CD8-positive, alpha-beta T cell (primary cell): ENCODE measurements at regions of chr16 and their contacts with region 1.

Region 1: GRCh38 chr16:50489182-50489581 is 59.0 kb upstream of the NKD1 start:
- DNase-seq: no peak
- ATAC-seq: no peak
- H3K4me3 ChIP-seq: no peak overlapping the region
- H3K4me3 Mint-ChIP-seq: no peak overlapping the region
- H3K27ac ChIP-seq: no peak overlapping the region
- H3K27ac Mint-ChIP-seq: no peak overlapping the region
- H3K4me1 ChIP-seq: no peaks in the 10 kb centered on the region
- H3K4me1 Mint-ChIP-seq: no peaks in the 10 kb centered on the region
- H3K27me3 ChIP-seq: no peaks in the 10 kb centered on the region
- H3K27me3 Mint-ChIP-seq: peaks cover 6% of the 10 kb centered on the region
- CTCF ChIP-seq: no peak

Region 2: DNA sequence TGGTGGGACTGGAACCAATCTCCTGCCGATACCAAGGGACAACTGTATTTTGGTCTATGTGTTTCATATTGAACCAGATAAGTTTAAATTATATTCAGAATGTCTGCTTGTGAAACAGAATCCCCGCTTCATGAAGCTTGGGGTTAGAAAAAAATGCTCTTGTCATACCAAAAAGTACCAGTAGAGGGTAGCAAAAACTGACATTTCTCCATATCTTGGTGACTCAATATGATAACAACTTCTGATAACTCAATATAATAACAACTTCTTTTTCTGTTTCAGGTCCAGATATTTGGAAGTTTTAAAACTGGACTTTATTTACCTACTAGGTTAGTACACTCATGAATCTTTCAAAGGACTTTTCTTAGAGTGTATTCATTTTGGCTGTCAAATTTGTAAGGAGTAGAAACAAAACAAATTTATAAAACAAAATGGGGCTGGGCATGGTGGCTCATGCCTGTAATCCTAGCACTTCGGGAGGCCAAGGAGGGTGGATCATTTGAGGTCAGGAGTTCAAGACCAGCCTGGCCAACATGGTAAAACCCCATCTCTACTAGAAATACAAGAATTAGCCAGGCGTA is 275.2 kb before region 1 on chr16:
- CTCF ChIA-PET with region 1: no interaction called
- POLR2A ChIA-PET with region 1: no interaction called
- intact Hi-C with region 1: no loop called
- DNase-seq: peak in 3 of 9 experiments; percentile 11 to 77 (median 68)
- ATAC-seq: peak; percentile 64
- H3K4me3 ChIP-seq: no peak overlapping the region
- H3K4me3 Mint-ChIP-seq: no peak overlapping the region
- H3K27ac ChIP-seq: no peak overlapping the region
- H3K27ac Mint-ChIP-seq: no peak overlapping the region
- H3K4me1 ChIP-seq: peaks cover 3% of the 10 kb centered on the region
- H3K4me1 Mint-ChIP-seq: peaks cover 26% of the 10 kb centered on the region
- H3K27me3 ChIP-seq: no peaks in the 10 kb centered on the region
- H3K27me3 Mint-ChIP-seq: no peaks in the 10 kb centered on the region
- CTCF ChIP-seq: peak; percentile 78

Region 3: GRCh38 chr16:50627419-50627818 is 138.2 kb after region 1 on chr16:
- CTCF ChIA-PET with region 1: no interaction called
- POLR2A ChIA-PET with region 1: no interaction called
- intact Hi-C with region 1: loop called in 1 of 2 experiments (anchors 1 kb)
- DNase-seq: peak in 8 of 9 experiments; percentile 24 to 71 (median 60)
- ATAC-seq: peak; percentile 85
- H3K4me3 ChIP-seq: no peak overlapping the region
- H3K4me3 Mint-ChIP-seq: peak overlapping the region; percentile 73
- H3K27ac ChIP-seq: no peak overlapping the region
- H3K27ac Mint-ChIP-seq: peak overlapping the region; percentile 45
- H3K4me1 ChIP-seq: peaks cover 40% of the 10 kb centered on the region
- H3K4me1 Mint-ChIP-seq: peaks cover 42% of the 10 kb centered on the region
- H3K27me3 ChIP-seq: no peaks in the 10 kb centered on the region
- H3K27me3 Mint-ChIP-seq: no peaks in the 10 kb centered on the region
- CTCF ChIP-seq: peak; percentile 37